PC-3 (cell line): ENCODE measurements at regions of chr11 and their contacts with region 1.

Region 1: GRCh38 chr11:9302448-9302847 is 11.9 kb downstream of the TMEM41B start:
- DNase-seq: no peak
- ATAC-seq: no peak
- H3K4me3 ChIP-seq: no peak overlapping the region
- H3K27ac ChIP-seq: no peak overlapping the region
- H3K4me1 ChIP-seq: no peaks in the 10 kb centered on the region
- H3K27me3 ChIP-seq: no peaks in the 10 kb centered on the region
- CTCF ChIP-seq: no peak

Region 2: GRCh38 chr11:9092853-9093778 is 209.3 kb before region 1 on chr11:
- CTCF ChIA-PET with region 1: no interaction called
- POLR2A ChIA-PET with region 1: no interaction called
- intact Hi-C with region 1: no loop called
- DNase-seq: peak; percentile 16
- ATAC-seq: peak; percentile 38; the same call in 1 of the 2 replicates
- H3K4me3 ChIP-seq: no peak overlapping the region
- H3K27ac ChIP-seq: no peak overlapping the region
- H3K4me1 ChIP-seq: no peaks in the 10 kb centered on the region
- H3K27me3 ChIP-seq: peaks cover 27% of the 10 kb centered on the region
- CTCF ChIP-seq: peak; percentile 47; the same call in 1 of the 2 replicates

Region 3: GRCh38 chr11:9130297-9130696 is 172.2 kb before region 1 on chr11:
- CTCF ChIA-PET with region 1: no interaction called
- POLR2A ChIA-PET with region 1: no interaction called
- intact Hi-C with region 1: no loop called
- DNase-seq: no peak
- ATAC-seq: no peak
- H3K4me3 ChIP-seq: no peak overlapping the region
- H3K27ac ChIP-seq: no peak overlapping the region
- H3K4me1 ChIP-seq: peaks cover 12% of the 10 kb centered on the region
- H3K27me3 ChIP-seq: no peaks in the 10 kb centered on the region
- CTCF ChIP-seq: no peak

Region 4: DNA sequence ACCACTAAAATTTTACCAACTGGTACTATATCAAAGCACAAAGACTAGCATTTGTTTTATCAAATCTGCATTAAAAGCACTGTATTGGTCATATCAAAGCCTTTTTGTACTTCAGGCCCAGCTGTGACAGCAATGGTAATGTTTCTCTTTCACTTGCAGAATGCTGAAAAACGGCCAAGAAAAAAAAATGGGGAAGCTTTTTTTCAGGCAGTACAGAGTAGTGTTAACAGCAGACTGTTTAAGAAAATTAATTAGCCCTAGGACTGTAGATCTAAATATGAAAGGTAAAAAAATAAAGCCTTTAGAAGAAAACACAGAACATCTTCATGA is 70.6 kb before region 1 on chr11:
- CTCF ChIA-PET with region 1: no interaction called
- POLR2A ChIA-PET with region 1: no interaction called
- intact Hi-C with region 1: no loop called
- DNase-seq: no peak
- ATAC-seq: no peak
- H3K4me3 ChIP-seq: no peak overlapping the region
- H3K27ac ChIP-seq: no peak overlapping the region
- H3K4me1 ChIP-seq: no peaks in the 10 kb centered on the region
- H3K27me3 ChIP-seq: no peaks in the 10 kb centered on the region
- CTCF ChIP-seq: no peak

Region 5: DNA sequence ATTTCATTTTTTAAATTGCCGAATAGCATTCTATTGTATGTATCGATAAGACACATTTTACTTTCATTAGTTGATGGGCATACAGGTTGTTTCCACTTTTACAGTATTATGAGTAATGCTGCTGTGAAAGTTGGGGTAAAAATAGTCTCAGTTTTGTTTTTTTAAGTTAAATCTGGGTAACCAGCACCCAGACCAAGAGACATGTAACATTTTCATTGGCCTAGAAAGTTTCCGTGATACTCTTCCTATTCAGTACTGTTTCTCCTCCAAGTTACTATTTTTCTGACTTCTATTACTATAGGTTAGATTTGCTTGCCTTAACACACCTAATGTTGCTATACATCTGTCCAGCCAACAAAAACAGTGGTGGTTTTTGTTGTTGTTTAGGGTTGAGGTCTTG is 94.3 kb after region 1 on chr11:
- CTCF ChIA-PET with region 1: no interaction called
- POLR2A ChIA-PET with region 1: interaction called, 14 read pairs
- intact Hi-C with region 1: no loop called
- DNase-seq: no peak
- ATAC-seq: no peak
- H3K4me3 ChIP-seq: no peak overlapping the region
- H3K27ac ChIP-seq: no peak overlapping the region
- H3K4me1 ChIP-seq: no peaks in the 10 kb centered on the region
- H3K27me3 ChIP-seq: no peaks in the 10 kb centered on the region
- CTCF ChIP-seq: no peak